Heart right ventricle (tissue), 16 donors: ENCODE measurements at regions of chr17 and their contacts with region 1.

Region 1: DNA sequence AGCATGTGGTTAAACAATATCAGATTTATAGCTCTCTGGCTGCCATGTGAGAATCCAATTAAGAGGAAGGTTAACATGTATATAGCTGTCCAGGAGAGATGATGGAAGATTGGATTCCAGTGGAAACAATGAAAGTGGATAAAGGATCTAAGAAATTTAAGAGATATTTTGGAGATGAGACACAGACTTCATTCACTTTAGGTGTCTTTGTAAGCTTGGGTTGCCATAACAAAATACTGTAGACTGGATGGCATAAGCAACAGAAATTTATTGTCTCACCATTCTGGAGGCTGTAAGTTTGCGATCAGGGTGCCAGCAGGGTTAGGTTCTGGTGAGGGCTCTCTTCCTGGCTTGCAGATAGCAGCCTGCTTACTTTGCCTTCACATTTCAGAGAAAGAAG is 155.9 kb upstream of the MYOCD start:
- DNase-seq: no peak
- ATAC-seq: no peak
- H3K4me3 ChIP-seq: no peak overlapping the region
- H3K27ac ChIP-seq: no peak overlapping the region
- H3K4me1 ChIP-seq: no peaks in the 10 kb centered on the region
- H3K27me3 ChIP-seq: peaks cover 0 to 3% (median 0%) of the 10 kb centered on the region in 7 donors
- CTCF ChIP-seq: no peak

Region 2: DNA sequence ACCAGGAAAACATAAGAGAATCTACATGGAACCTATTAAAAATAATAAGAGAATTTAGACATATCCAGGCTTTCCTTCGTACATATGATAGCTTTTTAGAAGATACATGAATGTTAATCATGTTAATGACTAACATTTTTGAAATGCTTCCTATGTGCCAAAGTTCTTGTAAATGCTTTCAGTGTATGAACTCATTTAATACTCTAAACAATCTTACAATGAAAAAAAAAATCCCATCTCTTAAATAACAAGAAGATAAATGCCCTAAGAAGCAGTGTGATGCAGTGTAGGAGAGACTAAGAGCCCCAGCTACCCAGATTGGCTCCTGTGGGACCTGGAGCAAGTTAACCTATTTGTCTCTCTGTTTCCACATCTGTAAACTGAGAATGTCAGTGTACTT is 64.5 kb before region 1 on chr17:
- intact Hi-C with region 1: loop called in 1 of 10 experiments (anchors 10 kb)
- DNase-seq: no peak
- ATAC-seq: no peak
- H3K4me3 ChIP-seq: no peak overlapping the region
- H3K27ac ChIP-seq: no peak overlapping the region
- H3K4me1 ChIP-seq: no peaks in the 10 kb centered on the region
- H3K27me3 ChIP-seq: no peaks in the 10 kb centered on the region
- CTCF ChIP-seq: no peak

Region 3: DNA sequence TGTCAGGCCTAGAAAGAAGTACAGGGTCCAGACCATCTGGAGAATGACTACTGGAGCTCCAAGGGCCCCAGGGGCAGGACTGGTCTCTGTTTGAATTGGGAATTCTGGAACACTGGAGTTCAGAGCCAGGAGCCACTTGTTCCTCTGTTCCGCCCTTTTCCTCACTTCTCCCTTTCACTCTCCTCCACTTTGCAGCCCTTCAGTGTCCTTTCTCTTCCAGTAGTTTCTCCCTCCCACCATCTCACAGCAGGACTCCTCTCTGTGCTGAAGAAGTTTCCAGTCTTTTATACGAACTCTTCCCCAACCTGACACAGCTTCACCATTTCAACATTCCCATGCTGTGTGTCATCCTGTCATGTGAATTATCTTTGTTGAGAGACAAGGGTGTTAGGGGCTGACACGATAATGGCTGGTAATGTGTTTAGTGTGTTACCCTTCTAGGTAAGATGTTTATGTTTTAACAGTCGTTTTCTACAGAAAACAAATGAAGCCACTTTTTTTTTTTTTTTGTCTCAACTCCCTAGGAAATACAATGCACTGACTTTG is 24.4 kb before region 1 on chr17:
- intact Hi-C with region 1: no loop called
- DNase-seq: no peak
- ATAC-seq: no peak
- H3K4me3 ChIP-seq: no peak overlapping the region
- H3K27ac ChIP-seq: no peak overlapping the region
- H3K4me1 ChIP-seq: no peaks in the 10 kb centered on the region
- H3K27me3 ChIP-seq: no peaks in the 10 kb centered on the region
- CTCF ChIP-seq: no peak

Region 4: GRCh38 chr17:12545877-12546513 is 36.2 kb after region 1 on chr17:
- intact Hi-C with region 1: no loop called
- DNase-seq: peak in 1 of 2 donors; percentile 31
- ATAC-seq: peak; percentile 73 to 90 (median 84)
- H3K4me3 ChIP-seq: no peak overlapping the region
- H3K27ac ChIP-seq: no peak overlapping the region
- H3K4me1 ChIP-seq: peaks cover 0 to 11% (median 0%) of the 10 kb centered on the region in 9 donors
- H3K27me3 ChIP-seq: no peaks in the 10 kb centered on the region
- CTCF ChIP-seq: peak; percentile 45 to 78 (median 72)